ENCODE measurements at regions of chr6 and their contacts with region 1.

Region 1: DNA sequence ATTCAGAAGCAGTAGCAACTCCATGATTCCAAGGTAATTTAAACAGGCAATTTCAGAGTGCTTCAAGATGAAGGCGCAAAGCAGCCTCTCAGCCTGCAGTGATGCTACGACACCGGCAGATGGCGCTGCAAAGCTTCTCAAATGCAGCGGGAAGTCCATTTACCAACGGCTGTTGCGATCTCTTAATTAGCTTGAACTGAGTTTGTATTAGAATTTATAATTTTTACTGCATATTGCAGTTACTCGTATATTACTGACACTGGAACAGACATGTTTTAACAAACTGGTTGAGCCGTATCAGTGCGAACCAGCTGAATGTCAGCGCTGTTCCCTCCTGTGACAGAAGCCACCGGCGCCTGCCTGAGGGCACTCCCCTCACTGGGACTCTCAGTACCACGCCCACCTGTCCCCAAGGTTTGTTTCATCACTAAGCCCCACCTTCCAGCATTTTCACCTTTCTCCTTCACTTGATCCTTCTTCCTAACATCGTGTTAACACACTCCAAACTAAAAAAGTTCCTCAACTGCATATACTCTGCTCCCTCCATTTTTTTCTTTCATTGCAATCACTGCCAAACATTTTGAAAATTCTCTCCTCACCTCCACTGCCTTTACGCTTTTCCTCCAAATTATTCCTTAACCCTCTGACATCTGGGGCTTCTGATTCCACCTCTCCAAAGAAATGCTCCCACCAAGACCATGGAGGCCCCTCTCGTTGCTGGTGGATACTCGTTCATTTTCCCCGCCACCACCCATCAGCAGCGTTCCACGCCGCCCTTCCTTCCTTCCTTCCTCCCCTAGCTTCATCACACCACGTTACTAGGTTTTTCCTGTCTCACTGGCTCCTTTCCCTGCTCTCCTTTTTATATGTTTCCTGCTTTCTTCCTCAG is 14.5 kb downstream of the GNL1 start:
- DNase-seq: peak; percentile 81 to 83 (median 82)
- H3K4me3 ChIP-seq: peak overlapping the region; percentile 39 to 60
- H3K4me3 Mint-ChIP-seq: peak overlapping the region; percentile 84 to 94 (median 90)
- H3K27ac ChIP-seq: peak overlapping the region; percentile 46
- H3K27ac Mint-ChIP-seq: peak overlapping the region; percentile 79 to 99 (median 95)
- H3K4me1 ChIP-seq: peaks cover 37% of the 10 kb centered on the region
- H3K4me1 Mint-ChIP-seq: peaks cover 31 to 44% (median 31%) of the 10 kb centered on the region in 4 donors
- H3K27me3 ChIP-seq: no peaks in the 10 kb centered on the region
- H3K27me3 Mint-ChIP-seq: no peaks in the 10 kb centered on the region

Region 2: GRCh38 chr6:30483677-30484279 is 58.0 kb before region 1 on chr6:
- CTCF ChIA-PET with region 1: interaction called, 416 read pairs
- POLR2A ChIA-PET with region 1: interaction called, 106 read pairs
- intact Hi-C with region 1: loop called (anchors 1 kb)
- DNase-seq: peak in 4 of 5 donors; percentile 44 to 57 (median 48)
- H3K4me3 ChIP-seq: no peak overlapping the region
- H3K4me3 Mint-ChIP-seq: no peak overlapping the region
- H3K27ac ChIP-seq: no peak overlapping the region
- H3K27ac Mint-ChIP-seq: peak overlapping the region in 2 of 7 donors; percentile 8 to 29
- H3K4me1 ChIP-seq: peaks cover 24% of the 10 kb centered on the region
- H3K4me1 Mint-ChIP-seq: peaks cover 27 to 42% (median 31%) of the 10 kb centered on the region in 4 donors
- H3K27me3 ChIP-seq: peaks cover 22% of the 10 kb centered on the region
- H3K27me3 Mint-ChIP-seq: peaks cover 18 to 22% of the 10 kb centered on the region in 2 donors

Region 3: GRCh38 chr6:30508890-30509736 is 32.6 kb before region 1 on chr6:
- CTCF ChIA-PET with region 1: interaction called, 31 read pairs
- POLR2A ChIA-PET with region 1: interaction called, 52 read pairs
- intact Hi-C with region 1: no loop called
- DNase-seq: peak; percentile 72 to 85 (median 82)
- H3K4me3 ChIP-seq: peak overlapping the region; percentile 1 to 26
- H3K4me3 Mint-ChIP-seq: peak overlapping the region; percentile 66 to 86 (median 80)
- H3K27ac ChIP-seq: peak overlapping the region; percentile 32
- H3K27ac Mint-ChIP-seq: peak overlapping the region; percentile 78 to 96 (median 89)
- H3K4me1 ChIP-seq: peaks cover 77% of the 10 kb centered on the region
- H3K4me1 Mint-ChIP-seq: peaks cover 38 to 73% (median 52%) of the 10 kb centered on the region in 4 donors
- H3K27me3 ChIP-seq: no peaks in the 10 kb centered on the region
- H3K27me3 Mint-ChIP-seq: no peaks in the 10 kb centered on the region

Region 4: DNA sequence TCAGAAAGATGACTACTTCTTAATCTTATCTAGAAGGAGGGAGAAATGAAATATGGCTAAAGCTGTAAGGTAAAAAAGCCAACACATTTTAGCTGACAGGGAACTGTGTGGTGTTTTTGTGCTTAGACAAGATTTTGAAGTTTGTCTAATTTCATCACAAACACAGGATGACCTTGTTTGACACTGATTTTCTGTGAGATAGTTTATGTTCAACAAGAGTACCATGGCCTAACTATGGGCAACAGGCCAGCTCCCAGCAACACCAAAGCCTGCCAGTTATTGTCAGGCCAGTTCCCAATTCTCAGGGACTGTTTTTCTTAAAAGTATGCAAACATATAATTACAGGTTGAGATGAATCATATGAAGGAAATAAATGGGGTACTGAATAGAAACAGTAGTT is 24.0 kb after region 1 on chr6:
- CTCF ChIA-PET with region 1: interaction called, 31 read pairs
- POLR2A ChIA-PET with region 1: interaction called, 50 read pairs
- intact Hi-C with region 1: no loop called
- DNase-seq: no peak
- H3K4me3 ChIP-seq: no peak overlapping the region
- H3K4me3 Mint-ChIP-seq: no peak overlapping the region
- H3K27ac ChIP-seq: no peak overlapping the region
- H3K27ac Mint-ChIP-seq: peak overlapping the region in 2 of 7 donors; percentile 19 to 35
- H3K4me1 ChIP-seq: peaks cover 10% of the 10 kb centered on the region
- H3K4me1 Mint-ChIP-seq: peaks cover 17 to 25% (median 21%) of the 10 kb centered on the region in 4 donors
- H3K27me3 ChIP-seq: no peaks in the 10 kb centered on the region
- H3K27me3 Mint-ChIP-seq: no peaks in the 10 kb centered on the region

Region 5: GRCh38 chr6:30600451-30600961 is 58.7 kb after region 1 on chr6:
- CTCF ChIA-PET with region 1: interaction called, 242 read pairs
- POLR2A ChIA-PET with region 1: interaction called, 60 read pairs
- intact Hi-C with region 1: loop called (anchors 1 kb)
- DNase-seq: no peak
- H3K4me3 ChIP-seq: no peak overlapping the region
- H3K4me3 Mint-ChIP-seq: no peak overlapping the region
- H3K27ac ChIP-seq: no peak overlapping the region
- H3K27ac Mint-ChIP-seq: peak overlapping the region in 2 of 7 donors; percentile 41 to 64
- H3K4me1 ChIP-seq: no peaks in the 10 kb centered on the region
- H3K4me1 Mint-ChIP-seq: peaks cover 7 to 26% (median 17%) of the 10 kb centered on the region in 4 donors
- H3K27me3 ChIP-seq: no peaks in the 10 kb centered on the region
- H3K27me3 Mint-ChIP-seq: no peaks in the 10 kb centered on the region

Region 6: GRCh38 chr6:30717042-30717844 is 175.5 kb after region 1 on chr6 and contains the start of gene MDC1:
- CTCF ChIA-PET with region 1: interaction called, 18 read pairs
- POLR2A ChIA-PET with region 1: interaction called, 22 read pairs
- intact Hi-C with region 1: loop called (anchors 1 kb)
- DNase-seq: peak; percentile 99 to 100 (median 100)
- H3K4me3 ChIP-seq: peak within 1 kb of the TSS; percentile 67 to 80
- H3K4me3 Mint-ChIP-seq: peak within 1 kb of the TSS; percentile 88 to 99 (median 98)
- H3K27ac ChIP-seq: peak within 1 kb of the TSS; percentile 69
- H3K27ac Mint-ChIP-seq: peak within 1 kb of the TSS; percentile 96 to 100 (median 98)
- H3K4me1 ChIP-seq: peaks cover 40% of the 10 kb centered on the region
- H3K4me1 Mint-ChIP-seq: peaks cover 22 to 70% (median 44%) of the 10 kb centered on the region in 4 donors
- H3K27me3 ChIP-seq: no peaks in the 10 kb centered on the region
- H3K27me3 Mint-ChIP-seq: no peaks in the 10 kb centered on the region
- total RNA-seq, gene MDC1: 60.7 to 73.5 TPM

Region 7: GRCh38 chr6:31087494-31088089 is 545.8 kb after region 1 on chr6:
- CTCF ChIA-PET with region 1: interaction called, 5 read pairs
- POLR2A ChIA-PET with region 1: no interaction called
- intact Hi-C with region 1: loop called (anchors 2 kb)
- DNase-seq: peak; percentile 75 to 86 (median 82)
- H3K4me3 ChIP-seq: no peak overlapping the region
- H3K4me3 Mint-ChIP-seq: peak overlapping the region in 1 of 8 donors; percentile 44
- H3K27ac ChIP-seq: no peak overlapping the region
- H3K27ac Mint-ChIP-seq: peak overlapping the region in 4 of 7 donors; percentile 32 to 58 (median 44)
- H3K4me1 ChIP-seq: peaks cover 16% of the 10 kb centered on the region
- H3K4me1 Mint-ChIP-seq: peaks cover 11 to 24% (median 18%) of the 10 kb centered on the region in 4 donors
- H3K27me3 ChIP-seq: no peaks in the 10 kb centered on the region
- H3K27me3 Mint-ChIP-seq: peaks cover 0 to 4% of the 10 kb centered on the region in 2 donors

Region 8: GRCh38 chr6:31462964-31463870 is 921.5 kb after region 1 on chr6:
- CTCF ChIA-PET with region 1: no interaction called
- POLR2A ChIA-PET with region 1: no interaction called
- intact Hi-C with region 1: no loop called
- DNase-seq: peak; percentile 91 to 96 (median 94)
- H3K4me3 ChIP-seq: peak overlapping the region; percentile 82 to 85
- H3K4me3 Mint-ChIP-seq: peak overlapping the region; percentile 97 to 100 (median 100)
- H3K27ac ChIP-seq: peak overlapping the region; percentile 99
- H3K27ac Mint-ChIP-seq: peak overlapping the region; percentile 99 to 100 (median 100)
- H3K4me1 ChIP-seq: peaks cover 55% of the 10 kb centered on the region
- H3K4me1 Mint-ChIP-seq: peaks cover 47 to 73% (median 60%) of the 10 kb centered on the region in 4 donors
- H3K27me3 ChIP-seq: no peaks in the 10 kb centered on the region
- H3K27me3 Mint-ChIP-seq: no peaks in the 10 kb centered on the region

Measured in CD4-positive, alpha-beta memory T cell (primary cell).